ENCODE measurements at regions of chr2 and their contacts with region 1.

Region 1: DNA sequence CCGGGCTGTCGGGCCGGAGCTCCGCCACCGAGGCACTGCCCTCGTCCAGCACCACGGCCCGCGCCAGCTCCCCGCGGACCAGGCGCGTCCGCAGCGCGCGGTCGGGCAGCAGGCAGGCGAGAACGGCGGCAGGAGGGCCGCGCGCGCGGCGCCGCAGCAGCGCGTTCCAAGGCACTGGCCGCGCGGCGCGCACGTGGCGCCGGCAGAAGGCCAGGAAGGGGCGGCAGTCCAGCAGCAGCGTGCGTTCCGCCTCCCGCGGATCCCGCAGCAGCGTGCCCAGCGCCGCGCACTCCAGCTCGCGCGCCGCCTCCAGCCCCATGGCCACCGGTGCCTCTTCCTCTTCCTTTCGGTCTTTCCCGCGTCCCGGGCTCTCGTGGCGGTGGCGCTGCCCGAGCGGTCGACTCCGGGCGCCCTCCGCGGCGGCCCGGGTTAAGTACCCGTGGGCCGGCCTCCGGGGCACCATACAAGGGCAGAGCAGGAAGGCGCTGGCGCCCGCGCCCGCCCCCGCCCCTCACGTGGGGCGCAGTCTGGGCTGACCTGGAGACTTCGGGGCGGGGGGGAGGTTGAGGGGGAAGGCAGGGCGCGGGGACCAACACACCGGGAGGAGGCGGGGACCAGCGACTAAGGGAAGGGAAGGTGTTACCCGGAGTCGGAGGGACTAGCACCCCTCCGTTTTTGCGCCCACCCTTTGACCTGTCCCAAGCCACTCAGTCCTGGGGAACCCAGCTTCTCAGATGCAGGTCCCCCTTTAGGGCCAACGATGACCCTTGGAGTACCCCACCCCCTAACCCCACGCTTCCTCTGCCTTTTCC is at the start of gene DUSP2:
- DNase-seq: peak; percentile 95
- ATAC-seq: peak; percentile 56
- H3K4me3 ChIP-seq: peak within 1 kb of the TSS; percentile 42 to 71 (median 59)
- H3K4me3 Mint-ChIP-seq: peak within 1 kb of the TSS; percentile 92
- H3K27ac ChIP-seq: peak within 1 kb of the TSS; percentile 95 to 97
- H3K27ac Mint-ChIP-seq: peak within 1 kb of the TSS; percentile 98
- H3K4me1 ChIP-seq: peaks cover 53 to 66% of the 10 kb centered on the region in 2 donors
- H3K4me1 Mint-ChIP-seq: peaks cover 69% of the 10 kb centered on the region
- H3K27me3 ChIP-seq: no peaks in the 10 kb centered on the region
- H3K27me3 Mint-ChIP-seq: no peaks in the 10 kb centered on the region
- CTCF ChIP-seq: no peak
- total RNA-seq, gene DUSP2: 69.8 and 74.9 TPM in 2 replicates

Region 2: GRCh38 chr2:96157651-96158553 is 12.7 kb after region 1 on chr2:
- CTCF ChIA-PET with region 1: interaction called, 1,065 read pairs
- POLR2A ChIA-PET with region 1: interaction called, 47 read pairs
- intact Hi-C with region 1: loop called (anchors 1 kb)
- DNase-seq: peak; percentile 76
- ATAC-seq: peak; percentile 74
- H3K4me3 ChIP-seq: peak overlapping the region in 1 of 5 experiments; percentile 6
- H3K4me3 Mint-ChIP-seq: peak overlapping the region; percentile 77
- H3K27ac ChIP-seq: peak overlapping the region; percentile 42 to 44
- H3K27ac Mint-ChIP-seq: peak overlapping the region; percentile 81
- H3K4me1 ChIP-seq: peaks cover 49 to 59% of the 10 kb centered on the region in 2 donors
- H3K4me1 Mint-ChIP-seq: peaks cover 74% of the 10 kb centered on the region
- H3K27me3 ChIP-seq: no peaks in the 10 kb centered on the region
- H3K27me3 Mint-ChIP-seq: no peaks in the 10 kb centered on the region
- CTCF ChIP-seq: no peak

Region 3: GRCh38 chr2:96164459-96165184 is 19.4 kb after region 1 on chr2:
- CTCF ChIA-PET with region 1: interaction called, 1,065 read pairs
- POLR2A ChIA-PET with region 1: interaction called, 47 read pairs
- intact Hi-C with region 1: loop called (anchors 1 kb)
- DNase-seq: peak; percentile 55
- ATAC-seq: peak; percentile 71
- H3K4me3 ChIP-seq: peak overlapping the region in 2 of 5 experiments; percentile 7 to 31
- H3K4me3 Mint-ChIP-seq: peak overlapping the region; percentile 78
- H3K27ac ChIP-seq: peak overlapping the region; percentile 64 to 82
- H3K27ac Mint-ChIP-seq: peak overlapping the region; percentile 93
- H3K4me1 ChIP-seq: peaks cover 23 to 42% of the 10 kb centered on the region in 2 donors
- H3K4me1 Mint-ChIP-seq: peaks cover 40% of the 10 kb centered on the region
- H3K27me3 ChIP-seq: no peaks in the 10 kb centered on the region
- H3K27me3 Mint-ChIP-seq: no peaks in the 10 kb centered on the region
- CTCF ChIP-seq: no peak

Region 4: DNA sequence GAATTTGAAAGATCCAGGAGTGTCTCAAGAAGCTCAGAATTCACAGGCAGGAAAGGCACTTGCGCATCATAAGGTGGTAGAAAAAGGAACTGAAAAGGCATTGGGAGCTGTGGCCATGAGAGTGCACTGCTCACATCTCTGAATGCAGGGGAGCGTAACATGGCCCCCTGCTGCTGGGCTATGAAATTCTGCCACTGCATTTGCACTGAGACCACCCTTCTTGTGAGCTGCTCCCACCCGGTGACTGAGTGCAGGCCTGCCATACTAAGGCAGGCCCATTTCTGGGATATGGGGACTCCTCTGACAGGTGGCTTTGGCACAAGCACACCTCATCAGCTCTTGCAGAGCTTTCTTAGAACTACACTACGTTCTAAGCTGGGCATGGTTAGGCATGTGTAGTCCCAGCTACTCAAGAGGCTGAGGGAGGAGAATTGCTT is 88.7 kb after region 1 on chr2:
- CTCF ChIA-PET with region 1: interaction called, 29 read pairs
- POLR2A ChIA-PET with region 1: interaction called, 3 read pairs
- intact Hi-C with region 1: no loop called
- DNase-seq: peak; percentile 70
- ATAC-seq: peak; percentile 98
- H3K4me3 ChIP-seq: no peak overlapping the region
- H3K4me3 Mint-ChIP-seq: peak overlapping the region; percentile 49
- H3K27ac ChIP-seq: no peak overlapping the region
- H3K27ac Mint-ChIP-seq: peak overlapping the region; percentile 88
- H3K4me1 ChIP-seq: peaks cover 15% of the 10 kb centered on the region in 2 donors
- H3K4me1 Mint-ChIP-seq: peaks cover 16% of the 10 kb centered on the region
- H3K27me3 ChIP-seq: no peaks in the 10 kb centered on the region
- H3K27me3 Mint-ChIP-seq: no peaks in the 10 kb centered on the region
- CTCF ChIP-seq: peak; percentile 41

Region 5: DNA sequence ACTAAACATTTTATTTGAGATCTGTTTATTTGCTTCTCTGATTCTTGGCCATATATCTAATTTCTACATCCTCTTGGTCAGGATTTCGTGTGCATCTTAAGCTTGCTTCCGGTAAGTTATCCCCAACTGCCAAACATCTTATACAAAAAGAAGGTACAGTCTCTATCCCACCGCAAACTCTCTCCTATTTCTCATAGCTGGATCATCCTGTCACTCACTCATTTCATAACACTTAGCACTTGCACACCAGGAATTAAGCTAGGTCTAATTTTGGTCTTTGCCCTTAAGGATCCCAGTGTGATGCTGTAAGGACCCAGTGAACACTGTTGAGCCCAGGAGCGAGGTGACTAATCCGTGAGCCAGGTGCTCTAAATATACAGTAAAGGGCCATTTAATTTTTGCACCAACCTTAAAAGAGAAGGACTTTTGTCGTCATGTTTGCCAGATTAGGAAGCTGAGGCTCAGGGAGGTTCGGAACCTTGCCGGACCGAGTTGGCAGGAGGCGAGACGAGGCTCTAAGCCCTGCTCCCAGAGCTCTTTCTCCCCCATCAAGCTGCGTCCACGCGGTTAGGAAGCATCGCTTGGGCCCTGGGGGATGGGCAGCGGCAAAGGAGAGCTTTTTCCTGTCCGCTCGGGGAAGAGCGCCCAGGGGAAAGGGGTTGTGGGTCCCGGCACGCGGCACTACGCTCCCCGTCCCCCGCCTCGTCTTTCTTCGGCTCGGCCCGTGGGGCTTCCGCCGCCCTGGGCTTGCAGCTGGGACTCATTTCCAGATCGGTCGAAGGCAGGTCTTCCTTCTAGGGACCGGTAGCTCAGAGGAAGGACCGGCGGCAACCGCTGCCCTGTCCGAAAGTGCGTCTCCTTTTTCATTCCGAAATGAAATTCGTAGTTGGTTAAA is 175.7 kb after region 1 on chr2:
- CTCF ChIA-PET with region 1: no interaction called
- POLR2A ChIA-PET with region 1: no interaction called
- intact Hi-C with region 1: loop called (anchors 1 kb)
- DNase-seq: no peak
- ATAC-seq: peak; percentile 9
- H3K4me3 ChIP-seq: peak overlapping the region; percentile 76 to 97 (median 79)
- H3K4me3 Mint-ChIP-seq: peak overlapping the region; percentile 87
- H3K27ac ChIP-seq: peak overlapping the region; percentile 34 to 68
- H3K27ac Mint-ChIP-seq: peak overlapping the region; percentile 84
- H3K4me1 ChIP-seq: peaks cover 33 to 43% of the 10 kb centered on the region in 2 donors
- H3K4me1 Mint-ChIP-seq: peaks cover 49% of the 10 kb centered on the region
- H3K27me3 ChIP-seq: no peaks in the 10 kb centered on the region
- H3K27me3 Mint-ChIP-seq: no peaks in the 10 kb centered on the region
- CTCF ChIP-seq: no peak